PC-9 (cell line): ENCODE measurements at regions of chr17 and their contacts with region 1.

Region 1: DNA sequence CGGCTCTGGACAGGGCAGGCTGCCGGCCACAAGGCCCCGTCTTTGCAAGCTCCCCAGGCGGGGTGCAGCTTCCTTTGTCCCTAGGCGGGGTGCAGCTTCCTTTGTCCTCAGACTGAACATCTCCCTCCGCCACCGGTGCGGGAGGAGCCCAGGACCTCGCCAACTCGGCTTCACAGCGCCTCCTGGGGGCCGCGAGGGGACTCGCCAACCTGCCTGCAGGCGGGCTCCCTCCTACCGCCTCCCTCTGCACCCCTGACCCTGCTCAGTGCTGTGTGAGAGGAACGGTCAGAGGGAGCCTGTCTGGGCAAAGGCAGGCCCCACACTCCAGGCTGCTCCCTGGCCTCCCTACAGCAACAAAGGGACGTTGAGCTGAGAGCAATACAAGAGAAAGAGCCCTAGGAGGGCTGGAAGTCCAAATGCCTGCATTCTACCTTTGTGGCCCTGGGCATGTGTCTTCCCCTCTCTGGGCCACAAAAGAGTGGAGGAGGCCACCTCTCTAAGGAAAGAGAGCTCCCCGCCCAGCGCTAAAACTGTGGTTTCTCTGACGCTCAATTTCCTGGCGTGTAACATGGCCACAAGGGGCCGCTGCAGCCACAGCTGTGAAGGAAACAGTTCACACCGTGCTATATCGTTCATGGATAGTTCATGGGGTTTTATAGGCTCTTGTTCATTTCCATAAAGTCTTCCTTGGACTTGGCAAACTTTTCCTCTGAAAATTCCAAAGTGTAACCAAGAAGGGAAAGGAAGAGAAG is 20.9 kb upstream of the KRT19 start:
- DNase-seq: peak; percentile 85 to 92
- H3K4me3 ChIP-seq: peak overlapping the region; percentile 53; the same call in 1 of the 2 replicates
- H3K27ac ChIP-seq: peak overlapping the region; percentile 93
- H3K4me1 ChIP-seq: peaks cover 69% of the 10 kb centered on the region
- H3K27me3 ChIP-seq: no peaks in the 10 kb centered on the region
- CTCF ChIP-seq: peak; percentile 94

Region 2: DNA sequence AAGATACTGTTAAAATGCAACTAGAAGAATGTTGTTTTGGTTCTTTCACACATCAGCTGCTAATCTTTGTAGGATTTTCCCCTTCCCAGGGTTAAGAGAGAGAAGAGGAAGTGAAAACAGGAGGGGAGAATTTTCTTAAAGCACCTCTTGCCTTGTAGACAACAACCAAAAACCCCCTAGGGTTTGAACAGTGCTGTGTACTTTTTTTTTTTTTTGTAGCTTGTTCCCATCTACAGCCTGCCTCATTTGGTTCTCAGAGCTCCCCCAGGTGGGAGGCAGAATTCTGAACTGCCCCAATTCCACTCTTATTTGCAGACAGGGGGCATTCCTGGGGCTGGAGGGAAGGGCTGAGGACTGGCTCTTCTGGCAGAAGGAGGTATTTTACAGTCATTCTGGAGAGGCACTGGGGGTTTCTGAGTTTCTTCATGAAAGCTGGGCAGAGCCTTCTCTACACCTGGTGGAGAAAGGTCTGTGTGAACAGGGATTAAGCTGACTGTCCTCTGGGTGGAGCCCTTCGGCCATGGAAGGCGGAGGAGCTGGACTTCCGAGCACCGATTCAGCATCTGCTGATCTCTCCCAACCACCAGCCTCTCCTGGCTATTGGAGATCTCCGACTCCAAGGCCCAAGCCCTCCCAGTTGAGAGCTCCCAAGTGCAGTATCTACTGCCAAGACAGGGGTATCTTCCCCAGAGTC is 933.6 kb before region 1 on chr17:
- CTCF ChIA-PET with region 1: interaction called, 4 read pairs
- POLR2A ChIA-PET with region 1: no interaction called
- intact Hi-C with region 1: loop called (anchors 1 kb)
- DNase-seq: peak; percentile 72
- H3K4me3 ChIP-seq: no peak overlapping the region
- H3K27ac ChIP-seq: no peak overlapping the region
- H3K4me1 ChIP-seq: peaks cover 10% of the 10 kb centered on the region
- H3K27me3 ChIP-seq: no peaks in the 10 kb centered on the region
- CTCF ChIP-seq: peak; percentile 73

Region 3: GRCh38 chr17:40909351-40909750 is 639.7 kb before region 1 on chr17:
- CTCF ChIA-PET with region 1: interaction called, 11 read pairs
- POLR2A ChIA-PET with region 1: no interaction called
- intact Hi-C with region 1: loop called (anchors 1 kb)
- DNase-seq: peak; percentile 79 to 92
- H3K4me3 ChIP-seq: 0 out of 2 replicates have a peak overlapping the region, but pooled peaks have one; percentile 16
- H3K27ac ChIP-seq: peak overlapping the region; percentile 95
- H3K4me1 ChIP-seq: peaks cover 66% of the 10 kb centered on the region
- H3K27me3 ChIP-seq: no peaks in the 10 kb centered on the region
- CTCF ChIP-seq: peak; percentile 86

Region 4: DNA sequence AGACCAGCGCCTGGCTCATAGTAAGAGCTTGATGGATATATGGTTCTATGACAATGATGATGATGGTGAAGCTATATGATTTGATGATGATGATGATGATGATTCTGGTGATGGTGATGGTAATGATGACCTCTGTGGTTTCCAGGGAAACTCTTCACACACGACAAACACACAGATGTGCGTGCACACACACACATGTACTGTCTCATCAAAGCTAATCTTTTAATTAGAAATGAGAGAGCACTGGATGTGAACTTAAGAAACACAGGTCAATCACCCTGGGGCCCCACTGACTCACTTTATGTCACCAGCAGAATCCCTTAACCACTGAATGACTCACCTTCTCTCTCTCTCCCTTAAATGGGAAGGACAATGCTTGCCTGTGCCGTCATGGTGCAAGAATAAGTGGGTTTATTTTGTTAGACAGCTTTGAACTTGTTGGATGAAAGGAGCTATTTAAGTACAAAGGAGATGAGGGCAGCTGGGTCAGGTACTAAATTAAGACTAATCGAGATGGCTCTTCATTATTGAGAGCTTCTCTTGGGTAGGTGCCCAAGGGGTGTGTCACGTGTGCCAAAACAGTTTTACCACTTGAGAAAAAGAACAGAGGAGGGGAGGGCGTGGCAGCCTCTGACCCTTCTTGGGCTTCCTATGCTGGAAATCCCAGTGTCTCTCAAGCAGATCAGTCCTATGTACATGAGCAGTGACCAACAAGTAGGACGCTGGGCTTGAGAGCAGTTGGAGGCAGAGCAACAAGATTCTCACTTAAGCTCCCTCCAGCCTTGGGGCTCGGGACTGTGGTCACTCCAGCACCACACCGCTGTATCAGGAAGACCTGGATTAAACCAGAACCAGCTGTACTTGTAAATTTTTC is 145.0 kb before region 1 on chr17:
- CTCF ChIA-PET with region 1: interaction called, 14 read pairs
- POLR2A ChIA-PET with region 1: interaction called, 11 read pairs
- intact Hi-C with region 1: loop called (anchors 2 kb)
- DNase-seq: peak; percentile 66 to 97
- H3K4me3 ChIP-seq: no peak overlapping the region
- H3K27ac ChIP-seq: peak overlapping the region; percentile 89
- H3K4me1 ChIP-seq: peaks cover 48% of the 10 kb centered on the region
- H3K27me3 ChIP-seq: no peaks in the 10 kb centered on the region
- CTCF ChIP-seq: no peak

Region 5: DNA sequence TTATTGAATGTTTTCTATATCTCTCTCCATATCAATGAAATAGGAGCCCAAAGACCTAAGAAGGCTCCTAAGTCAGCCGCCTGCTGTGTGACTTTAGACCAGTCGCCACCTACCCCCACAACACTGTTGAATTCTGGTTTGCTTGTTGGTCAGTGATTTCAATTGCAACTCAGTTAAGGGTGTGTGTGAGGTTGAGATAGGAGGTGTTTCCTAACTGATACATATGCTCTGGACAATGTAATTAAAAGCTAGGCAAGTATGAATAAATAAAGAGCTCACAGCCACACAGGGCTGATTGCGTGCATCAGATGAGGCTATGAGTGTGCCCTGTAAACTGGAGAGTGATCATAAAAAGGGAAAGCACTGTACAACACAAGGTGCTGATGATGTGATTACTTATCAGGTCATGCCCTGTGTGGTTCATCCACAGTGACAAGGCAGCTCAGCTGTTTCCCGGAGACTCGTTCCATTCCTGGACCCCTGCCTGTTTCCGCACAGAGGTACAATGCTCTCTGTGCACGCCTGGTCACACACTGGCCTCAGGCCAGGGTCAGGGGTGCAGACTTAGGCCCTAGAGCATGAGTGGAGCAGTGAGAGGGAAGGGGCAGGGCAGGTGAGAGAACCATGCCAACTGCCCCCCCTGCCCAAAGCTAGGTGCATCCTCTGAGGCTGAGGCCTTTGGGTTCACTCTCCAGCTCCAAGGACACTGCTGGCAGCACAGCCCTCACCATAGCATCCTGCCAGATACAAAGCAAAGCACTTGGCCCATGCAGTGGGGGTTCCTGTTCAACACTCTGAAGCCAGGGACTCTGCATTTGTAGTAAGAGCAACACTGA is 64.8 kb before region 1 on chr17:
- CTCF ChIA-PET with region 1: no interaction called
- POLR2A ChIA-PET with region 1: no interaction called
- intact Hi-C with region 1: no loop called
- DNase-seq: no peak
- H3K4me3 ChIP-seq: no peak overlapping the region
- H3K27ac ChIP-seq: no peak overlapping the region
- H3K4me1 ChIP-seq: no peaks in the 10 kb centered on the region
- H3K27me3 ChIP-seq: no peaks in the 10 kb centered on the region
- CTCF ChIP-seq: no peak

Region 6: GRCh38 chr17:41505809-41506731 is 43.0 kb before region 1 on chr17:
- CTCF ChIA-PET with region 1: interaction called, 18 read pairs
- POLR2A ChIA-PET with region 1: interaction called, 22 read pairs
- intact Hi-C with region 1: loop called (anchors 1 kb)
- DNase-seq: peak in 1 of 2 experiments; percentile 59
- H3K4me3 ChIP-seq: peak overlapping the region; percentile 58; the same call in 1 of the 2 replicates
- H3K27ac ChIP-seq: peak overlapping the region; percentile 94
- H3K4me1 ChIP-seq: peaks cover 84% of the 10 kb centered on the region
- H3K27me3 ChIP-seq: no peaks in the 10 kb centered on the region
- CTCF ChIP-seq: no peak

Region 7: DNA sequence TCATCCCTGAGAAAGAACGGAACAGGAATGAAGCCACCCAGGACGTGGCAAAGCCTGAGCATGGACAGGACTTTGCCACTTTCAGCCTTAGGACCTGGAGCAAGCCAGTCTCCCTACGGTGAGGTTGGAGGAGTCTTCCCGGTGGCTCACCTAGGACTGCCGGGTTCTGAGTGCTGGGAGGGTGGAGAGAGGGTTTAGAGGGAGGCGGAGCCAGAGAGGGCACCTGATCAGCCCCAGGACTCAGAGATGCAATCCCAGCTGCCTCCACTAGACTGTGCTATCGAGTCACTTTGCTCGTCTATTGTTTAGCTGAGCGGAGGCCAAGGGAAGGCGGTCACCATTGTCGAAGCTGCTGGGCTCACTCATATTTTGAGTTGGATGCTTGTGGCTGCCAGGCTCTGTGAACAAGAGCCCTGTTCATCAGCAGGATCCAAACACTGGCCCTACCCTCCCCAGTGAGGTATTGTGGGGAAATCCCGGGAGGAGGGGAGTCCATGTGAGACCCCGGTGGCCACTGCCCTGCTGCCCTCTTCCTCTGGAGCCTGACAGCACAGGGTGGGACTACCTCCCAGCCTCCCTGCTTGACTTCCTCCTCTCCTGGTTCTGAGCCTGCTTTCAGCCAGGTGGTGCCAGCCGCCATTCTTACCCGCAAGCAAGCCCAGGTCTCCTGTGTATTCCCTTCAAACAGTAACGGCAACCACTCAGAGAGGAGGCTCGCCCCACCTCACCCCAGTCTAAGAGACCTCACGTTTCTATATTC is 30.6 kb after region 1 on chr17:
- CTCF ChIA-PET with region 1: interaction called, 25 read pairs
- POLR2A ChIA-PET with region 1: no interaction called
- intact Hi-C with region 1: loop called (anchors 1 kb)
- DNase-seq: peak; percentile 62 to 90
- H3K4me3 ChIP-seq: no peak overlapping the region
- H3K27ac ChIP-seq: peak overlapping the region; percentile 37
- H3K4me1 ChIP-seq: peaks cover 56% of the 10 kb centered on the region
- H3K27me3 ChIP-seq: no peaks in the 10 kb centered on the region
- CTCF ChIP-seq: peak; percentile 84

Region 8: DNA sequence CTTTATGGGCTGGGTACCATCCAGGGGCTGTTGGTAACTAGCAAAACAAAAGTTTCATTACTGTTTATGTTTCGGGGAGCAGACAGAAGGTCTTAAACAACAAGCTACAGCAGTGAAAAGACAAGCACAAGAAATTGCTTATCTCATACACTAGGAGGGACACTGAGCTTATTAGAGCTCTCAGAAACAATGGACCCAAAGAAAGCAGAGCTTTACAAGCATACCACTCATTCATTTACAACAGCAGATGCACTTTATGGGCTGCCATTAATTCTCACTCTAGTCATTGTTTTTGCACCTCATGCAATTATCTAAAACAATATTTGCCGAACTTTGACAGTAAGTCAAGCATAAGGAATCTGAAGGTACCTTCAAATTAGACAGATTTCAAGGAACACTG is 53.5 kb after region 1 on chr17:
- CTCF ChIA-PET with region 1: no interaction called
- POLR2A ChIA-PET with region 1: no interaction called
- intact Hi-C with region 1: no loop called
- DNase-seq: peak in 1 of 2 experiments; percentile 39
- H3K4me3 ChIP-seq: no peak overlapping the region
- H3K27ac ChIP-seq: no peak overlapping the region
- H3K4me1 ChIP-seq: no peaks in the 10 kb centered on the region; the same call in 1 of the 2 replicates
- H3K27me3 ChIP-seq: no peaks in the 10 kb centered on the region
- CTCF ChIP-seq: no peak; the same call in 1 of the 2 replicates